ENCODE measurements at regions of chr17 and their contacts with region 1.

Region 1: GRCh38 chr17:57255776-57256681 is at the start of gene MSI2:
- DNase-seq: peak; percentile 90
- H3K4me3 Mint-ChIP-seq: peak within 1 kb of the TSS; percentile 85
- H3K27ac Mint-ChIP-seq: peak within 1 kb of the TSS; percentile 85
- H3K4me1 Mint-ChIP-seq: peaks cover 41% of the 10 kb centered on the region
- H3K27me3 Mint-ChIP-seq: no peaks in the 10 kb centered on the region
- total RNA-seq, gene MSI2: 65.7 to 71.9 TPM

Region 2: DNA sequence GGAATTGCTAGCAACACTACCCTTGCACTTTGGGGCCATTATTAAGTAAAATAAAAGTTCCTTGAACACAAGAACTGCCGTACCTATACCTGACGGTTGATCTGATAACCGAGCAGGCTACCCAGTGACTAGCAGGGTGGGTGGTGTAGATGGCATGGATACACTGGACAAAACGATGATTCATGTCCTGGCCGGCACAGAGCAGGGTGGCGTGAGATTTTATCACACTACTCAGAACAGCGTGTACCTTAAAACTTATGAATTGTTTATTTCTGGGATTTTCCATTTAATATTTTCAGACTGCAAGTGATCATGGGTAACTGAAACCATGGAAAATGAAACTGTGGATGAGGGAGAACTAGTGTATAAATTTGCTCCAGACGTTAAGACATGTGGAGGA is 40.7 kb before region 1 on chr17:
- CTCF ChIA-PET with region 1: no interaction called
- POLR2A ChIA-PET with region 1: no interaction called
- intact Hi-C with region 1: no loop called
- DNase-seq: no peak
- H3K4me3 Mint-ChIP-seq: no peak overlapping the region
- H3K27ac Mint-ChIP-seq: no peak overlapping the region
- H3K4me1 Mint-ChIP-seq: peaks cover 4% of the 10 kb centered on the region
- H3K27me3 Mint-ChIP-seq: peaks cover 11% of the 10 kb centered on the region

Region 3: GRCh38 chr17:57279432-57279831 is 23.4 kb after region 1 on chr17:
- CTCF ChIA-PET with region 1: no interaction called
- POLR2A ChIA-PET with region 1: interaction called, 3 read pairs
- intact Hi-C with region 1: loop called (anchors 2 kb)
- DNase-seq: no peak
- H3K4me3 Mint-ChIP-seq: no peak overlapping the region
- H3K27ac Mint-ChIP-seq: no peak overlapping the region
- H3K4me1 Mint-ChIP-seq: peaks cover 88% of the 10 kb centered on the region
- H3K27me3 Mint-ChIP-seq: no peaks in the 10 kb centered on the region